ENCODE measurements at regions of chr3 and their contacts with region 1.

Region 1: GRCh38 chr3:177478170-177478860 is 281.0 kb upstream of the TBL1XR1 start:
- DNase-seq: peak; percentile 84 to 100
- H3K4me3 ChIP-seq: no peak overlapping the region
- H3K27ac ChIP-seq: peak overlapping the region; percentile 85
- H3K4me1 ChIP-seq: peaks cover 33% of the 10 kb centered on the region
- H3K27me3 ChIP-seq: no peaks in the 10 kb centered on the region
- CTCF ChIP-seq: no peak

Region 2: GRCh38 chr3:177284383-177284881 is 193.9 kb before region 1 on chr3:
- CTCF ChIA-PET with region 1: no interaction called
- POLR2A ChIA-PET with region 1: no interaction called
- intact Hi-C with region 1: loop called (anchors 2 kb)
- DNase-seq: no peak
- H3K4me3 ChIP-seq: no peak overlapping the region
- H3K27ac ChIP-seq: no peak overlapping the region
- H3K4me1 ChIP-seq: peaks cover 59% of the 10 kb centered on the region
- H3K27me3 ChIP-seq: no peaks in the 10 kb centered on the region
- CTCF ChIP-seq: no peak

Region 3: GRCh38 chr3:177300842-177301241 is 177.5 kb before region 1 on chr3:
- CTCF ChIA-PET with region 1: no interaction called
- POLR2A ChIA-PET with region 1: no interaction called
- intact Hi-C with region 1: no loop called
- DNase-seq: no peak
- H3K4me3 ChIP-seq: no peak overlapping the region
- H3K27ac ChIP-seq: no peak overlapping the region
- H3K4me1 ChIP-seq: peaks cover 4% of the 10 kb centered on the region
- H3K27me3 ChIP-seq: no peaks in the 10 kb centered on the region
- CTCF ChIP-seq: no peak

Region 4: GRCh38 chr3:177378168-177378567 is 100.1 kb before region 1 on chr3:
- CTCF ChIA-PET with region 1: no interaction called
- POLR2A ChIA-PET with region 1: interaction called, 14 read pairs
- intact Hi-C with region 1: no loop called
- DNase-seq: no peak
- H3K4me3 ChIP-seq: no peak overlapping the region
- H3K27ac ChIP-seq: no peak overlapping the region
- H3K4me1 ChIP-seq: no peaks in the 10 kb centered on the region
- H3K27me3 ChIP-seq: no peaks in the 10 kb centered on the region
- CTCF ChIP-seq: no peak

Region 5: DNA sequence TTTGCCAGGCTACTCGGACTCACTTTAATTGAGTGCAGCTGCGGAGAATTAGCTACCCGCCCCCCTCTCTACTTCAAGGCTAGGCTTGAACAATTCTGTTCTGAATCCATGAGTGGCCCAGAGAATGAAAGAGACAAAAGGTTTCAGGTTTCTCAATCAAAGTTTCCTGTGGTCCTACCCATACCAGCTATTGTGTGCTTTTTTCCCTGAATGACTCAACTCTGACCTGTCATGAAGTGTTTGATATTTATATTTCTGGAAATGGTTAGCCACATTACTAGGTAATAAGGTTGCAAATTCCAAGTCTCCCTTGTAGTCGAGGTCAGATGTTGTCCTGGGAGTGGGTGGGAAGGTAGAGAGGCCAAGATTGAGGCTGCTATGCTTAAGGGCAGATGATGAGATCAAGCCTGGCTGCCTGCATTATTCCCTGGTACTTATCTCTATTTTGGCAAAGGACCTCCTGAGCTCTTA is 111.6 kb after region 1 on chr3:
- CTCF ChIA-PET with region 1: no interaction called
- POLR2A ChIA-PET with region 1: interaction called, 3 read pairs
- intact Hi-C with region 1: loop called (anchors 1 kb)
- DNase-seq: peak; percentile 51 to 98
- H3K4me3 ChIP-seq: no peak overlapping the region
- H3K27ac ChIP-seq: peak overlapping the region; percentile 83
- H3K4me1 ChIP-seq: peaks cover 49% of the 10 kb centered on the region
- H3K27me3 ChIP-seq: no peaks in the 10 kb centered on the region
- CTCF ChIP-seq: no peak

Region 6: DNA sequence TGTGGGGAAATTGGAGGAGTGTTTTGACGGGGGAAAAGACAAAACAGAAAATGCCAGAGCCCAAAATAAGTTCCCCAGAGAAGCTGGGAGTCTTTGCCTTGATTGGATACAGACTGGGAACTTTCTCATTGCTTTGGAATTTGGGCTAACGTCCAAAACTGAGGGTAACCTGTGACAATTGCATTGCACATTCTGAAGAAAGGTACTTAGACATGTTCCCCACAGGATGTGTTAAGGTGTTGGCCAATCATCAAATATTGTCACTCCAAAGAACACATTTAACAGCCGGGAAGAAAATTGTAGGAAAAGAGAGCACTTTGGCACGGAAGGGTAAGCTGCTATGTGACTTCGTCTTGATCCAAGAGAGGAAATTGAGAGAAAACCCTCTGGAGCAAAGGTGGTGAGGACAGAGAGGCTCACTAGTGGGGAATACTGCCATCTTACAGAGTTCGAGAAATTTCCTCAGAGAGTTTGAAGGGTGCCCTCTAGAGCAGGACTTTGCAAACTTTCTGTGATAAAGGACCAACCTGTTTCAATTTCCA is 338.4 kb after region 1 on chr3:
- CTCF ChIA-PET with region 1: no interaction called
- POLR2A ChIA-PET with region 1: no interaction called
- intact Hi-C with region 1: loop called (anchors 2 kb)
- DNase-seq: peak; percentile 75 to 97
- H3K4me3 ChIP-seq: 0 out of 2 replicates have a peak overlapping the region, but pooled peaks have one; percentile 1
- H3K27ac ChIP-seq: peak overlapping the region; percentile 76
- H3K4me1 ChIP-seq: peaks cover 40% of the 10 kb centered on the region
- H3K27me3 ChIP-seq: no peaks in the 10 kb centered on the region
- CTCF ChIP-seq: peak; percentile 46; the same call in 1 of the 2 replicates

Measured in PC-9 (cell line).